Gastrocnemius medialis (tissue), 4 donors: ENCODE measurements at regions of chr1 and their contacts with region 1.

Region 1: DNA sequence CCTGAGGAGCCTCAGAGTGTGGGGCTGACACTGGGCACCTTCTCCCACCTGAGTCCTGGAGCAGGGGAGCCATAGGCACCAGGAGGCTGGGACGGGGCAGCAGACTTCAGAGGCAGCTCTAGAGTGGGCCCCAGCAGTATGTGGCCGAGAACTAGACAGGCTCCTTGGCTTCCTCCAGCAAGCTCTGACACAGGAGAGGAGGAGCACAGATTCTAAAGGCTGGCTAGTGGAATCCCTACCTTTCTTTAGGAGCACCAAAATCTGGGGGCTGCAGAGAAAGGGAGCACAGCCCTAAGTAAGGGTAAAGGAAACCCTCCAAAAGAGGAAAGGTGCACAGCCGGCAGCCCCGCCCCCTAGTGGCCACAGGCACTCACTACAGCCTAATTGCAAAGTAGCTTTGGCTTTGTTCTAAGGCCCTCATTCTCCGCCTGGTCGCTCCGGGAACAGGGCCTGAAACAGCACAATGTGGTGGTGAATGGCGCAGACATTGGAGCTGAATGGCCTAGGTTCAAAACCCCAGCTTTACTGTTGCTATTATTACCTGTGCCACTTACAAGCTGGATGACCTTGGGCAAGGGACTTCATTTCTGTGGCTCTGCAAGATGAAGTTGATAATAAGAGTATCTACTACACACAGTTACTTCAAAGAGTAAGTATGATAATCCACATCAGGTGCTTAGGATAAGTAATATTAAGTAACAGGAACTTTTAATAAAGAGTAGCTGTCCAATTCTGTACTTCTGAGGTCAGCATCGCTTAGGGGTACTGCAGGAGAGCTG is 8.8 kb upstream of the GUCA2A start:
- DNase-seq: peak in 1 of 2 donors; percentile 47
- ATAC-seq: peak; percentile 51 to 79
- H3K4me3 ChIP-seq: no peak overlapping the region
- H3K27ac ChIP-seq: peak overlapping the region; percentile 2 to 60 (median 39)
- H3K4me1 ChIP-seq: peaks cover 13 to 18% of the 10 kb centered on the region in 2 donors
- H3K27me3 ChIP-seq: no peaks in the 10 kb centered on the region
- CTCF ChIP-seq: peak; percentile 76 to 97 (median 91)
- POLR2A ChIP-seq: no peak

Region 2: DNA sequence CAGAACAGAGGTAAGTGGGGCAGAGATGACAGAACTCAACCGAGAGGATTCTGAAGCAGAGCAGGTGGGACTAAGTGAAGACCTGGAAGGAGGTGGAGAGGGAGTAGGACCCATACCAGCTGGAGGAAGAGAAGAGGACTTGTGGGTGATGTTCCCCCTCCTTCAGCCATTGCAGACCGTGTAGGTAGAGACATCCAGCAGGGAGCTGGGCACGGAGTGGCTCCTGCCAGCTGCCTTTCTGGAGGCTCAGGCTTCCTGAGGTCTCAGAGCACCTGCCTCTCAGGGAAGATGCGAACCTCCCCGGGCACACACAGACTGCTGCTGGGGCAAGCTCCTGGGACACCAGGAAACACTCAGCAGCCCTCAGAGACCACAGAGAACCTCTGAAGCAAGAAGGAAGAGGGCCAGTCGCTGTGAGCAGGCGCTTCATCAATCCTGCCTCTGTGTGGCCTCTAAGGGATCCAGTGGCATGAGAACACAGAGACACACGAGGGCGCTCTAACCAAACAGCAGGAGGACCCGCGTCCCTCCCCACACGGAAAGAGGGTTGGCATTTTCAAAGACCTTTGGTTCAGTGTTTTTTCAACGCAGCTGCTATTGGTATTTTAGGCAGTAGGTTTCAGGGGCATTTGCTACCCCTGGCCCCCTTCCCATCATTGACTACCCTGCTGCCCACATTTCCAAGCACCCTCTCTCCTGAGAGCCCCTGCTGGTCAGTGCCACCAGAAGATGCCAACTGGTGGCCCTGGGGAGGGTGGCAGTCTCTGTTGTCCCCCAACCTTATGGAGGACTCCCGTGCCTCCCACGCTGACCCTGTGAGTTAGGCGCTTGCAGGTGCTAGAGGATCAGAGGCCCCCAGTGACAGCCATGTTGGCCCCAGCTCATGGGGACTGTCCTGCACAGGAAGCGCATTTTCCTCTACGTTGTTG is 599.3 kb before region 1 on chr1:
- in situ Hi-C with region 1: loop called in 3 of 4 experiments (anchors 10 kb)
- intact Hi-C with region 1: loop called (anchors 2 kb)
- DNase-seq: peak; percentile 48 to 71
- ATAC-seq: peak; percentile 88 to 95
- H3K4me3 ChIP-seq: no peak overlapping the region
- H3K27ac ChIP-seq: no peak overlapping the region
- H3K4me1 ChIP-seq: peaks cover 3 to 7% of the 10 kb centered on the region in 2 donors
- H3K27me3 ChIP-seq: no peaks in the 10 kb centered on the region
- CTCF ChIP-seq: peak; percentile 79 to 91 (median 84)
- POLR2A ChIP-seq: no peak

Region 3: GRCh38 chr1:42146626-42147320 is 26.6 kb before region 1 on chr1:
- in situ Hi-C with region 1: no loop called
- intact Hi-C with region 1: loop called (anchors 1 kb)
- DNase-seq: peak in 1 of 2 donors; percentile 28
- ATAC-seq: peak in 1 of 2 donors; percentile 65
- H3K4me3 ChIP-seq: no peak overlapping the region
- H3K27ac ChIP-seq: no peak overlapping the region
- H3K4me1 ChIP-seq: no peaks in the 10 kb centered on the region
- H3K27me3 ChIP-seq: peaks cover 7 to 22% (median 21%) of the 10 kb centered on the region in 3 donors
- CTCF ChIP-seq: peak; percentile 68 to 85 (median 73)
- POLR2A ChIP-seq: no peak

Region 4: GRCh38 chr1:42319871-42320484 is 146.6 kb after region 1 on chr1:
- in situ Hi-C with region 1: loop called in 1 of 4 experiments (anchors 10 kb)
- intact Hi-C with region 1: no loop called
- DNase-seq: no peak
- ATAC-seq: peak; percentile 44 to 61
- H3K4me3 ChIP-seq: peak overlapping the region; percentile 14 to 40 (median 18)
- H3K27ac ChIP-seq: peak overlapping the region; percentile 75 to 87 (median 84)
- H3K4me1 ChIP-seq: peaks cover 83 to 86% of the 10 kb centered on the region in 2 donors
- H3K27me3 ChIP-seq: no peaks in the 10 kb centered on the region
- CTCF ChIP-seq: no peak
- POLR2A ChIP-seq: no peak

Region 5: DNA sequence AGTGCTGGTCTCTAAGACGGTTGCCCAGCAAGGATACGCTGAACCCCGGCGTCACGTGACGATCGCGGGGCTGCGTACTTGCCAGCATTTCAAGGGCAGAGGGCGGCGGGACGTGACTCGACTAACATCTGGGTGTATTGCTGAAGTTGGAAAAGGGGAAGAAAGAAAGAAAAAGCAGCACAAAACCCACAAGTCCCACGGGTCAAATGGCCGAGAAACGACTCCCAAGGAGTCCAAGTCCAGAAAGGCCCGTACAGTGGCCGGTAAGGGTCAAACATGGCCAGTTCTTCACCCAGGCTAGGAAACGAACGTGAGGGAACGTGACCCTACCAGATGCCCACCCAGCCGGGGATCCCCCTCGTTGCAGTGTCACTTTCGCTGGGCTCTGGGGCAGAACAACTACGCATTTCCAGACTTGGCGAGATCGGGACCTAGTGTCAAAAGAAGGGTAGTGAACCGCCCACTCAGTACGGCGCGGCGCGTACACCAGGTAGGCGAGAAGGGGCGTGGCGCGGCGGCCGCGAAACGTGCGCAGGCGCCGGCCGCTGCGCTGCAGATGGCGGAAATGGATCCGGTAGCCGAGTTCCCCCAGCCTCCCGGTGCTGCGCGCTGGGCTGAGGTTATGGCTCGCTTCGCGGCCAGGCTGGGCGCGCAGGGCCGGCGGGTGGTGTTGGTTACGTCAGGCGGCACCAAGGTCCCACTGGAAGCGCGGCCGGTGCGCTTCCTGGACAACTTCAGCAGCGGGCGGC is 282.8 kb after region 1 on chr1 and contains the starts of genes PPCS and ZMYND12:
- in situ Hi-C with region 1: no loop called
- intact Hi-C with region 1: loop called (anchors 10 kb)
- DNase-seq: peak; percentile 67 to 79
- ATAC-seq: peak; percentile 91 to 93
- H3K4me3 ChIP-seq: peak within 1 kb of the TSS; percentile 86 to 99 (median 90)
- H3K27ac ChIP-seq: peak within 1 kb of the TSS; percentile 90 to 95 (median 94)
- H3K4me1 ChIP-seq: peaks cover 13 to 19% of the 10 kb centered on the region in 2 donors
- H3K27me3 ChIP-seq: no peaks in the 10 kb centered on the region
- CTCF ChIP-seq: peak in 3 of 5 experiments; percentile 13 to 35 (median 16)
- POLR2A ChIP-seq: peak in 1 of 2 donors; percentile 66
- total RNA-seq, gene PPCS: 31.7 to 55.1 (median 42.1) TPM
- total RNA-seq, gene ZMYND12: 0.80 to 1.0 TPM in 2 of 4 donors, not detected in the others